GM12878 (cell line): ENCODE measurements at regions of chr2 and their contacts with region 1.

Region 1: DNA sequence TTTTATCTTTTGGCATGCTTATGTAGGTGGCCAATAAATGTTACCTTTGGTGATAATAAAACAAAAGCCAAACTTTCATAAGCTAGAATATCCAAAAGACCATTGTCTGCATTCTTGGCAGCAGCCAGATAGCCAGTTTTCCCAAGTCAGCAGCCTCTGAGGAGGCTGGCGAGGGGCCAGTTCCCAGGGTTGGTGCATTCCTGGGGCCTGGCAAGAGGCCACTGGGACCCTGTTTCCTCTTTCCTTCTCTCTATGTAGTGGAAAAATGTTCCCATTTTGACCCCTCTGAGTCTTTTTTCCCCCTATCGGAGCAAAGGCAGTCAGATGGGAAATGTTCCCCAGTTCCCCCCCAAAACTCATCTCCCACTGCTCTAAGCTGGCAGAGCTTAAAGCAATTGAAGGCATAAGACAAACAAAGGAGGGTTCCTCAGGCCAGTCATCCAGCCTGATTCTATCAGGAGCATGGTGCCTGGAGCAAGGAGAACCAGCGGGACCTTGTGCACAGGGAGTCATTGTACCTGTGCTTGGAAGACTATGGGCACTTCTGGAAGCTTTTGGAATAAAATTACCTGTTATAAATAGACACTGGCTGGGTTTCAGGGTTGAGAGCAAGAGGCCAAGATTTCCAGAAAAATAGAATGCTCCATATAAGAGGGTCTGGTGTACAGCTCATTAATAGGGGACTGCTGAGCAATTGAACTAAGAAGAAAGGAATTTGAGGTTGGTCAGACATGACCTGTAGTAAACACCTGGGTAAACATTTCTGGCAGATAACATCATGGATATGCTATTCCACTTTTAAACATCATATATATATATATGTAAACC is 63.5 kb downstream of the NCKAP5 start:
- DNase-seq: no peak
- ATAC-seq: no peak
- H3K4me3 ChIP-seq: no peak overlapping the region
- H3K27ac ChIP-seq: no peak overlapping the region
- H3K4me1 ChIP-seq: no peaks in the 10 kb centered on the region
- H3K27me3 ChIP-seq: no peaks in the 10 kb centered on the region
- CTCF ChIP-seq: no peak
- EP300 ChIP-seq: no peak
- POLR2A ChIP-seq: no peak
- RAD21 ChIP-seq: no peak

Region 2: GRCh38 chr2:133415210-133415876 is 89.4 kb before region 1 on chr2:
- CTCF ChIA-PET with region 1: interaction called, 22 read pairs
- POLR2A ChIA-PET with region 1: interaction called, 7 read pairs
- RAD21 ChIA-PET with region 1: interaction called, 5 read pairs
- SMC1A ChIA-PET with region 1: interaction called, 20 read pairs
- in situ Hi-C with region 1: no loop called
- intact Hi-C with region 1: loop called (anchors 2 kb)
- DNase-seq: no peak
- ATAC-seq: peak; percentile 22
- H3K4me3 ChIP-seq: no peak overlapping the region
- H3K27ac ChIP-seq: no peak overlapping the region
- H3K4me1 ChIP-seq: no peaks in the 10 kb centered on the region
- H3K27me3 ChIP-seq: peaks cover 0 to 4% of the 10 kb centered on the region in 2 experiments; a peak in 1 of 4 replicates
- CTCF ChIP-seq: no peak
- EP300 ChIP-seq: no peak
- POLR2A ChIP-seq: no peak
- RAD21 ChIP-seq: no peak

Region 3: DNA sequence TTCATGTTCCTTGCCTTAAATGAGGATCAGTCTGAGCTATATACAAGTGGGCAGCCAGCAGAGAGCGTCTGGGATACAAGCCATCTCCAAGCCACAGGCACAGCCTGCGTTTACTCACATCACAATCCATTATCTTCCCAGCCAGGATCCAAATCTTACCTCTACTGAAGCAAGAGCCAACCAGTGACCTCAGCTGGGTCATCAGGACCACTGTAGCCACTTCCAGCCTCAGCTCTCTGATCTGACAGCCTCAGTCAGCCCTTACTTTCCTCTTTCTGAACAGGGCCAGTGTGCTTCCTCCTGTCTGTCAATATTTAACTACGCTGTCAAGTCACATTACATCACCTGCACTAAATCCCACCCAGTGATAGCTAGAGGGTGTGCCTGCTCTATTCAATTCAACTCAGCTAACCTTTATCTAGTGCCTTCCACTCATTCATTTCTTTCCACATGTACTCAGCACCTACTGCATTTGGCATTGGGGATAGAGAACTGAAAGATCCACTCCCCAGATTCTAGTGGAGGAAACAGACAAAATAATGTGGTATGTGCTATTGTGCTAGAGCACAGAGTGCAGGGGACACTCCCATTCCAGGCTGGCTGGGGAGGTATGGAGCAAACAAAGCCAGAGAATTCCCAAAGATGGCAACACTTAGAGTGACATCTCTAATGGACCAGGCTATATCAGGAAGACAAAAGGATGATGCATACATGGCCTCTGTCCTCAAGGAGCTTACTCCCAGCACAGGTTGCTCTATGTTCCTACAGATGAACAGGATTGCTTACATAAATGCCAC is 83.1 kb before region 1 on chr2:
- CTCF ChIA-PET with region 1: interaction called, 22 read pairs
- POLR2A ChIA-PET with region 1: interaction called, 7 read pairs
- RAD21 ChIA-PET with region 1: interaction called, 28 read pairs
- SMC1A ChIA-PET with region 1: interaction called, 20 read pairs
- in situ Hi-C with region 1: no loop called
- intact Hi-C with region 1: loop called (anchors 2 kb)
- DNase-seq: peak; percentile 61
- ATAC-seq: peak; percentile 92
- H3K4me3 ChIP-seq: no peak overlapping the region
- H3K27ac ChIP-seq: no peak overlapping the region
- H3K4me1 ChIP-seq: no peaks in the 10 kb centered on the region
- H3K27me3 ChIP-seq: peaks cover 0 to 4% of the 10 kb centered on the region in 2 experiments; a peak in 1 of 4 replicates
- CTCF ChIP-seq: peak in 1 of 3 experiments; percentile 16; a peak in 1 of 6 replicates
- EP300 ChIP-seq: no peak
- POLR2A ChIP-seq: no peak
- RAD21 ChIP-seq: no peak

Region 4: DNA sequence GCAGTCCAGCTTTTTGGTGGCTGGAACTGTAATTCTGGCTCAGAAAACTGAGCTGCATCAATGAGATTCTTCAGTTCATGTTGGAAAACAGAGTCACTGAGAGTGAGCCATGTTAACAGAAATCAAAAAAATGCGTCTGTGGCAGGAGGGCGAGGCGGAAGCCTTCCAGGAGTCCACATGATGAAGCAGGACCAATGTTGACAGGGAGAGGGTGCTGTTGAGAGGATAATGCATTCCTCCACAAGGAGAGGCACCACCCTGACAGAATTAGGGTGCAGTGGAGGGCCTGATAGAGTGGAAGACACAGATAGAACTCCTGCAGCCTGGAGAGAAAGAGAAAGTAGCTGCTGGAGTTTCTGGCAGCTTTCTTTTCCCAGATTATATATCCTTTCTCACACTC is 860.6 kb after region 1 on chr2:
- CTCF ChIA-PET with region 1: no interaction called
- POLR2A ChIA-PET with region 1: no interaction called
- RAD21 ChIA-PET with region 1: no interaction called
- SMC1A ChIA-PET with region 1: no interaction called
- in situ Hi-C with region 1: no loop called
- intact Hi-C with region 1: no loop called
- DNase-seq: no peak
- ATAC-seq: peak; percentile 31; the same call in 1 of the 3 replicates
- H3K4me3 ChIP-seq: no peak overlapping the region
- H3K27ac ChIP-seq: no peak overlapping the region
- H3K4me1 ChIP-seq: peaks cover 18% of the 10 kb centered on the region
- H3K27me3 ChIP-seq: no peaks in the 10 kb centered on the region
- CTCF ChIP-seq: peak in 2 of 3 experiments; percentile 9 to 12; a peak in 1 of 6 replicates
- EP300 ChIP-seq: no peak
- POLR2A ChIP-seq: no peak
- RAD21 ChIP-seq: peak; percentile 25; the same call in 1 of the 2 replicates